KBM-7 (cell line): ENCODE measurements at regions of chr5 and their contacts with region 1.

Region 1: GRCh38 chr5:139795074-139796001 is at the start of gene PSD2:
- DNase-seq: no peak

Region 2: GRCh38 chr5:139844472-139845145 is 49.3 kb after region 1 on chr5:
- in situ Hi-C with region 1: loop called (anchors 10 kb)
- DNase-seq: peak; percentile 85